GM13976 (cell line): ENCODE measurements at regions of chr13 and their contacts with region 1.

Region 1: GRCh38 chr13:19766213-19766990 is 16.3 kb downstream of the PSPC1 start:
- DNase-seq: no peak
- CTCF ChIP-seq: no peak

Region 2: DNA sequence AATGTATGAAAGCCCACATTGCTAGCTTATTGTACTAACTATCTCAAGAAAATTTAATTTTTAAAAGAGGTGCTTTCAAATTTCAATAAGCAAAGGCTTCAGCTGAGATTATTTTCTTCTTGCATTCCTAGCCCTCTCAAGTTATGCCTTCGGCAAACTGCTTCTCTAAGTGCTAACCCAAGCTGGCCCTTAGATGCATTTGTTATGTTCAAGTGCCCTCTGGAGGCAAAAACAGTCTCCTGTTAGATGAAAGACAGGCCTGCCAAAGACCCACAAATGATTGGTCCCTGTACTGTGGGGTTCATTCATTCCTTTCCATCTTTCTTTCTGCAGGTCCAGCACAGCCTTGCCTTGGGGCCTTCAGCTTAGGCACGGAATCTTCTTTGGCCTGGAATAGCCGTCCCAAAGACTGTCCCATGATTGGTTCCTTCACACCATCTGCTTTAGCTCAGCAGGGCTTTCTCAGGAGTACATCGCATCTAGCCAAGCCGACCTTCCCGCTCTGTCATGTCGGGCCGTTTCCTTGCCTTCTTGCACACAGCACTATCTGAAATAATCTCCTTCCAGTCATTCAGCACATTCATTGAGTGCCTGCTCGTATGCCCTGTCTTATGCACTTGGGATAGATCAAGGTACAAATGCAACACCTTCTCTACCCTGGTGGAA is 178.6 kb before region 1 on chr13:
- in situ Hi-C with region 1: no loop called
- DNase-seq: peak; percentile 48
- CTCF ChIP-seq: peak; percentile 53

Region 3: DNA sequence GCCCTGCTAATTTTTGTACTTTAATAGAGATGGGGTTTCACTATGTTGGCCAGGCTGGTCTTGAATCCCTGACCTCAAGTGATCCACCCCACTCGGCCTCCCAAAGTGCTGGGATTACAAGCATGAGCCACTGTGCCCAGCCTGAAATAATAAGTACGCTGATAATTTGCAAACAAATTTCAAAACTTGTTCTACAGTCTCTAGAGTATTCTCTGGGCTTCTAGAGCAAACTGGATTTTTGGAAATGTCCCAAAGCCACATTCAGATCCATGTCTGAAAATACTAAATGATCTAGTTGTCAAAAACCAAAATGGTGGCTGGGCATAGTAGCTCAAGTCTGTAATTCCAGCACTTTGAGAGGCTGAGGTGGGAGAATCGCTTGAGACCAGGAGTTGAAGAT is 56.3 kb after region 1 on chr13:
- in situ Hi-C with region 1: loop called (anchors 10 kb)
- DNase-seq: no peak
- CTCF ChIP-seq: no peak

Region 4: DNA sequence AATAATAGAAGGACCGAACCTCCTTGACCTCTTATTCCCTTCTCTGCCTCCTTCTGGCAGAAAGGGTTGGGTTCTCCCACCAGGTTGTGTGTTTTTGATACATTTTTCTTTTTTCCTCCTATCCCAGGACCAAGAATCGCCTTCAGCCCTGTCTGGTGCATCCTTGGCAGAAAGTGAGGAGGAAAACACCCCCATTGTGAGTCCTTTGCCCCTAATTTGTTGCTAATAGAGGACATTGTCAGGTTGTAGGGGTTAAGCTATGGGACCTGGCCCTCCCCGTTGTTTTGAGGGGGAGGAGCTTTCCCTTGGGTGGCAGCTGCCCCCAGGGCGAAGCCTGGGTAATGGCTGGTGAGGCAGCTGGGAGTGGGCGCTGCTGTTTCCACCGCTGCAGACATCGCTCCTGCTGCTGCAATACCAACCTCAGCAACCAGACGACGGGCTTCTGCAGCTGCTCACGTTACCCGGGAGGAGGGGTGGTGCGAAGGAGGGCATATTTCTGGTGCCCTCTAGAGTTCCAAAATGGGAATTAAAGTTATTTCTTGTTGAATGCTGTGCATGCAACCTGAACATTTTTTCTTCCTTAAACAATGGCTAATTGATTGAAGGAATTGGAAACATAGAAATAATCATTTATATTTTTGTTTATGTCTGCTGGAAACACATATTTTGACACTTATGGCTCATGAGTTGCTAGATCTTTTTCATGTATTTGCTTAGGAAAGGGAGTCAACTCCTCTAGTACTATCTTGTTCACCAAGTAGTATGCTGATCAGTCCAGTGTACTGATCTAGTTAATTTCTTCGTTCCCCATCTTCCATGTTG is 193.6 kb after region 1 on chr13:
- in situ Hi-C with region 1: loop called (anchors 25 kb)
- DNase-seq: peak; percentile 67
- CTCF ChIP-seq: peak; percentile 59